ENCODE measurements at regions of chr17 and their contacts with region 1.

Region 1: GRCh38 chr17:80124351-80124981 is 22.5 kb downstream of the EIF4A3 start:
- DNase-seq: peak; percentile 75
- ATAC-seq: peak; percentile 97
- H3K4me3 Mint-ChIP-seq: peak overlapping the region; percentile 21
- H3K27ac Mint-ChIP-seq: peak overlapping the region; percentile 67
- H3K4me1 Mint-ChIP-seq: peaks cover 23% of the 10 kb centered on the region
- H3K27me3 Mint-ChIP-seq: no peaks in the 10 kb centered on the region
- CTCF ChIP-seq: 0 out of 2 replicates have a peak, but pooled peaks have one; percentile 28

Region 2: GRCh38 chr17:80065478-80066170 is 58.8 kb before region 1 on chr17:
- CTCF ChIA-PET with region 1: interaction called, 10 read pairs
- POLR2A ChIA-PET with region 1: no interaction called
- DNase-seq: peak; percentile 53
- ATAC-seq: peak; percentile 80
- H3K4me3 Mint-ChIP-seq: no peak overlapping the region; the same call in 1 of the 2 replicates
- H3K27ac Mint-ChIP-seq: peak overlapping the region; percentile 93
- H3K4me1 Mint-ChIP-seq: peaks cover 23% of the 10 kb centered on the region
- H3K27me3 Mint-ChIP-seq: no peaks in the 10 kb centered on the region
- CTCF ChIP-seq: no peak

Region 3: DNA sequence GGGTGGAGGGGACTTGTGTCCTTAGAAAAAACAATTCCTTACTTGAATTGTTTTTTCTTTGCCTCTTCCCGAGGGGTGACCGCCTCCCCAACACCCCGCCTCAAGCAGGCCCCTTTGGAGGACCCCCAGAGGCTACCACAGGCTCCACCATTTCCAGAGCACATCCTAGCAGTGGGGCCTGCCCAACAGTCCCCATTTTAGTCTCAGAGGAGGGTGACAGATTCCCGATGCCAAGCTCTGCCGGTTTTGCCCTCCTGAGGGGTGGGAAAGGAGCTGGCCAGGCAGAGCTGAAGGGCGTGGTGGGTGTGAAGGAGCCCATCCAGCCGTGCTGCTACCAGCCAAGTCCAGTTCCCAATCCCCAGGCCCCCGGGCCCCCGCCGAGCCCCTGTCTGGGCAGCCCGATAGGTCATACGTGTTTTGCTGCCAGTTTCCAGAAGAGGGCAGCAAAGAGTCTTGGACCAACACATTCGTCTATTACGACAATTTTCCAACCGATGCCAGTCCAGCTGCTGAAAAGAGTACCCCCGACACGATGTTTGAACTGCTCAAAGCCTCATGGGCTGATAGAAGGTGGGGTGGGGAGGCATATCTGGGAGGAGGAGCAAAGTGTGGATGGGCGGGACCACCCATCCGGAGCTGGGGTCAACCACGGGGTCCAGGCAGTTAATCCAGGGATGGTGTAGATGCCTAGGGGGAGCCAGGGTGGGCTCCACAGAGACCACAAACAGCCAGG is 41.9 kb before region 1 on chr17:
- CTCF ChIA-PET with region 1: interaction called, 72 read pairs
- POLR2A ChIA-PET with region 1: interaction called, 3 read pairs
- DNase-seq: peak; percentile 85
- ATAC-seq: peak; percentile 81
- H3K4me3 Mint-ChIP-seq: no peak overlapping the region
- H3K27ac Mint-ChIP-seq: no peak overlapping the region
- H3K4me1 Mint-ChIP-seq: peaks cover 8% of the 10 kb centered on the region; the same call in 1 of the 2 replicates
- H3K27me3 Mint-ChIP-seq: no peaks in the 10 kb centered on the region
- CTCF ChIP-seq: peak; percentile 40; the same call in 1 of the 2 replicates

Region 4: DNA sequence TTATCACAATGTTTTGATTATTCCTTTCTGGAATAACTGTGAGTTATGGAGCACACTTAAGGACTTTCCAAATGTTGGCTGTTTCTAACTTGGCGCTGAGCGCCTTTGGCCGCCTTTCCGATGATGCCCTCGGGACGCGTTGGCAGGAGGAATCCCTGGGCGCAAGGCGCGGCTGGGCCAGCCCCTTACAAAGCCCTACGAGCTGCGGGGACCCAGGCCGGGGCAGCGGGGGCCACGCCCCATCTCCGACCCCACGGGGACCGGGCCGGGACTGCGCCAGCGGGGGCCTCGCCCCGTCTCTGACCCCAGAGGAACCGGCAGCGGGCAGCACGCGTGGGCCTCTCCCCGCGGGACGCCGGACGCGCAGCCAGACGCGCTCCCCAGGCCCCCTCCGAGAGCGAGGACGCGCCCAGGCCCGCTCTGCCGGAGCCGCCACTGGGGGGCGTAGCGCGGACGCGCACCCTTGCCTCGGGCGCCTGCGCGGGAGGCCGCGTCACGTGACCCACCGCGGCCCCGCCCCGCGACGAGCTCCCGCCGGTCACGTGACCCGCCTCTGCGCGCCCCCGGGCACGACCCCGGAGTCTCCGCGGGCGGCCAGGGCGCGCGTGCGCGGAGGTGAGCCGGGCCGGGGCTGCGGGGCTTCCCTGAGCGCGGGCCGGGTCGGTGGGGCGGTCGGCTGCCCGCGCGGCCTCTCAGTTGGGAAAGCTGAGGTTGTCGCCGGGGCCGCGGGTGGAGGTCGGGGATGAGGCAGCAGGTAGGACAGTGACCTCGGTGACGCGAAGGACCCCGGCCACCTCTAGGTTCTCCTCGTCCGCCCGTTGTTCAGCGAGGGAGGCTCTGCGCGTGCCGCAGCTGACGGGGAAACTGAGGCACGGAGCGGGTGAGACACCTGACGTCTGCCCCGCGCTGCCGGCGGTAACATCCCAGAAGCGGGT is 23.2 kb before region 1 on chr17 and contains the start of gene GAA:
- CTCF ChIA-PET with region 1: interaction called, 107 read pairs
- POLR2A ChIA-PET with region 1: interaction called, 16 read pairs
- DNase-seq: peak; percentile 82
- ATAC-seq: peak; percentile 76
- H3K4me3 Mint-ChIP-seq: peak within 1 kb of the TSS; percentile 92
- H3K27ac Mint-ChIP-seq: peak within 1 kb of the TSS; percentile 68; the same call in 1 of the 2 replicates
- H3K4me1 Mint-ChIP-seq: peaks cover 17% of the 10 kb centered on the region
- H3K27me3 Mint-ChIP-seq: peaks cover 12% of the 10 kb centered on the region
- CTCF ChIP-seq: peak; percentile 65
- total RNA-seq, gene GAA: 91.6 to 97.7 TPM (median 93.9 TPM) in 3 replicates

Region 5: GRCh38 chr17:80109713-80110446 is 14.6 kb before region 1 on chr17:
- CTCF ChIA-PET with region 1: interaction called, 26 read pairs
- POLR2A ChIA-PET with region 1: interaction called, 4 read pairs
- DNase-seq: peak; percentile 9
- ATAC-seq: no peak
- H3K4me3 Mint-ChIP-seq: no peak overlapping the region
- H3K27ac Mint-ChIP-seq: no peak overlapping the region
- H3K4me1 Mint-ChIP-seq: peaks cover 6% of the 10 kb centered on the region; the same call in 1 of the 2 replicates
- H3K27me3 Mint-ChIP-seq: no peaks in the 10 kb centered on the region
- CTCF ChIP-seq: no peak

Region 6: DNA sequence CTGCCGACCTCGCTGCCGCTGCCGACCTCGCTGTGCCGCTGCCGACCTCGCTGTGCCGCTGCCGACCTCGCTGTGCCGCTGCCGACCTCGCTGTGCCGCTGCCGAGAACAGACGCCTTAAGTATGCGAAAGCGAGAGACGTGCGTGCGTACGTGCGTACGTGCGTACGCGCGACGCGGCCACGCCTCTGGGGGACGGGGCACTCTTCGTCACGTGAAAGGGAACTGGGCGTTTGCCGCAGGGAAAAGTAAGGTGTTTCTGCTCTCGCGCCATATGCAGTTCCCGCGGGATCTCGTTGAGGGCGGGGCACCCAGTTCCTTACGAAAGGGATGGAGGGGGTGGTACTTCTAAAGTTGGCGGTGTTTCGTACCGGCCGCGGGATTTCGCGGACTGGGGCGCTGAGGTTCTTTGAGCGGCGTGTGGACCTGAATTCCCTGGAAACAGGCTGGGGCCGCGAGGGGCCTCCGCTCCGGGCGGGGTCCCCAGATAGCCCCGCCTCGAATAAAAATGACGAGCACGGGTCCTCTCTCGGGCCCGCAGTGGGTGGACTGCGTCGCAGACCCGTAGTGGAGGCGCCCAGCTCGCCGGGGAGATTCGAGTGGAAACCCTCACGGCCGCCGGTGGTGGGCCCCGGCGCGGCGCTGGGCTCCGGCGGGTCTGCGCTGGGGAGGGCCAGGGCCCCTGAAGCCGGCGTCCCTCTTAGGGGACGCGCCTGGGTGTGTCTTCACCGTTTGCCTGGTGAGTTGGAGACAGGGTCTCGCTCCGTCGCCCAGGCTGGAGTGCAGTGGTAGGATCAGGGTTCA is 22.8 kb after region 1 on chr17 and contains the start of gene EIF4A3:
- CTCF ChIA-PET with region 1: interaction called, 35 read pairs
- POLR2A ChIA-PET with region 1: interaction called, 3 read pairs
- DNase-seq: peak; percentile 99
- ATAC-seq: peak; percentile 92
- H3K4me3 Mint-ChIP-seq: peak within 1 kb of the TSS; percentile 77
- H3K27ac Mint-ChIP-seq: peak within 1 kb of the TSS; percentile 90
- H3K4me1 Mint-ChIP-seq: peaks cover 29% of the 10 kb centered on the region
- H3K27me3 Mint-ChIP-seq: peaks cover under 1% of the 10 kb centered on the region
- CTCF ChIP-seq: no peak
- total RNA-seq, gene EIF4A3: 142 to 160 TPM (median 142 TPM) in 3 replicates

Region 7: DNA sequence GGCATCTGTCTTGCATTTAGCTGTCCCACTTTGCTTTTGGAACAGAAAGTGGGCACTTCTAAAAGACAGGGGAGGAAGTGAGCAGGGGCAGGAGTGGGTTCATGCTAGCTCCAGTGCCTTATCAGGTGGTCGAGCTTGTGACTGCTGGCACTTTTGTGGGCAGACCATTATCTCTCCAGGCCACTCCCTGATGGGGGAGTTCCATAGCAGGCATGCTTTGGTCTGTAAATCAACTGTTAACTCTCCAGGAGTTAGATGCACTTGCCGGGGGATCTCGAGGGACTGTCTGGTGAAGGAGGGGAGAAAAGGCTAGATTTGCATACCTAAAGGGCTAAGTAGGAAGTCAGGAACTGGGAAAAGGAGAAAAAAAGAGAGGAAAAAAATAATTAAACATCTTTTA is 36.1 kb after region 1 on chr17:
- CTCF ChIA-PET with region 1: interaction called, 16 read pairs
- POLR2A ChIA-PET with region 1: no interaction called
- DNase-seq: no peak
- ATAC-seq: peak; percentile 86
- H3K4me3 Mint-ChIP-seq: peak overlapping the region; percentile 50
- H3K27ac Mint-ChIP-seq: peak overlapping the region; percentile 84
- H3K4me1 Mint-ChIP-seq: peaks cover 32% of the 10 kb centered on the region
- H3K27me3 Mint-ChIP-seq: peaks cover 17% of the 10 kb centered on the region
- CTCF ChIP-seq: no peak

Measured in WTC11 (cell line).